ENCODE measurements at regions of chr19 and their contacts with region 1.

Region 1: DNA sequence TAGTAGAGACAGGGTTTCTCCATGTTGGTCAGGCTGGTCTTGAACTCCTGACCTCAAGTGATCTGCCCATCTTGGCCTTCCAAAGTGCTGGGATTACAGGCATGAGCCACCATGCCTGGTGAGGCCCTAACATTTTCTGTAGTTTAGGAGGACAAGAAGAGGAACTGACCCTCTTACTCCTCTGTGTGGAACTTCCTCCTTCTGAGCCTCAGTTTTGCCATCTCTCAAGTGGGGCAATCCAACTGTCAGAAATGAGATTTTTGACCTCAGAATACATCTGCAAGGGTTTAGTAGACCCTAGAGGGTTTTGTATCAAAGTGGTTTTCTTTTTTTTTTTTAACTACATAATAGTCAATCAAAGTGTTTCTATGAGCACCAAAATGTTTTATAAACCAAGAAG is 2.4 kb downstream of the DKKL1 start:
- DNase-seq: no peak
- H3K4me3 ChIP-seq: no peak overlapping the region
- H3K27ac ChIP-seq: peak overlapping the region; percentile 3
- H3K4me1 ChIP-seq: peaks cover 44% of the 10 kb centered on the region
- CTCF ChIP-seq: no peak

Region 2: DNA sequence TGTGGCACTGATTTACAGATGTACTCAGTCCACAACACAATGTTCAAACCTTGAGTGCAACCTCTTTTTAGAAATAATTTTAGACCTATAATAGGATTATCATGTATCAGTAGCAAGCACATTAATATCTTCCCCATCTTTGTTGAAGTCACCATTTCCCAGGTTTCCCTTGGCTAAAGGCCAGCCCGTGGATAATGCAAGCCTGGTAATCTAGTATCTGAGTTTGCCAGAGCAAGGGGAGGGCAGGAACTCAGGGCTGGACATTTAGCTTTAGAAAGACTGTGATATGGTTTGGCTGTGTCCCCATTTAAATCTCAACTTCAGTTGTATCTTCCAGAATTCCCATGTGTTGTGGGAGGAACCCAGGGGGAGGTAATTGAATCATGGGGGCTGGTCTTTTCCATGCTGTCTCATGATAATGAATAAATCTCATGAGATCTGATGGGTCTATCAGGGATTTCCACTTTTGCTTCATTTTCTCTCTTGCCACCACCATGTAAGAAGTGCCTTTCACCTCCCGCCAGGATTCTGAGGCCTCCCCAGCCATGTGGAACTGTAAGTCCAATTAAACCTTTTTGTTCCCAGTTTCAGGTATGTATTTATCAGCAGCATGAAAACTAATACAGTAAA is 78.9 kb before region 1 on chr19:
- CTCF ChIA-PET with region 1: no interaction called
- POLR2A ChIA-PET with region 1: no interaction called
- intact Hi-C with region 1: no loop called
- DNase-seq: no peak
- H3K4me3 ChIP-seq: no peak overlapping the region
- H3K27ac ChIP-seq: no peak overlapping the region
- H3K4me1 ChIP-seq: no peaks in the 10 kb centered on the region
- CTCF ChIP-seq: no peak

Region 3: GRCh38 chr19:49340069-49340864 is 25.8 kb before region 1 on chr19:
- CTCF ChIA-PET with region 1: no interaction called
- POLR2A ChIA-PET with region 1: no interaction called
- intact Hi-C with region 1: loop called (anchors 1 kb)
- DNase-seq: peak; percentile 99
- H3K4me3 ChIP-seq: peak overlapping the region; percentile 76
- H3K27ac ChIP-seq: peak overlapping the region; percentile 98
- H3K4me1 ChIP-seq: peaks cover 52% of the 10 kb centered on the region
- CTCF ChIP-seq: peak; percentile 21; the same call in 1 of the 2 replicates

Region 4: DNA sequence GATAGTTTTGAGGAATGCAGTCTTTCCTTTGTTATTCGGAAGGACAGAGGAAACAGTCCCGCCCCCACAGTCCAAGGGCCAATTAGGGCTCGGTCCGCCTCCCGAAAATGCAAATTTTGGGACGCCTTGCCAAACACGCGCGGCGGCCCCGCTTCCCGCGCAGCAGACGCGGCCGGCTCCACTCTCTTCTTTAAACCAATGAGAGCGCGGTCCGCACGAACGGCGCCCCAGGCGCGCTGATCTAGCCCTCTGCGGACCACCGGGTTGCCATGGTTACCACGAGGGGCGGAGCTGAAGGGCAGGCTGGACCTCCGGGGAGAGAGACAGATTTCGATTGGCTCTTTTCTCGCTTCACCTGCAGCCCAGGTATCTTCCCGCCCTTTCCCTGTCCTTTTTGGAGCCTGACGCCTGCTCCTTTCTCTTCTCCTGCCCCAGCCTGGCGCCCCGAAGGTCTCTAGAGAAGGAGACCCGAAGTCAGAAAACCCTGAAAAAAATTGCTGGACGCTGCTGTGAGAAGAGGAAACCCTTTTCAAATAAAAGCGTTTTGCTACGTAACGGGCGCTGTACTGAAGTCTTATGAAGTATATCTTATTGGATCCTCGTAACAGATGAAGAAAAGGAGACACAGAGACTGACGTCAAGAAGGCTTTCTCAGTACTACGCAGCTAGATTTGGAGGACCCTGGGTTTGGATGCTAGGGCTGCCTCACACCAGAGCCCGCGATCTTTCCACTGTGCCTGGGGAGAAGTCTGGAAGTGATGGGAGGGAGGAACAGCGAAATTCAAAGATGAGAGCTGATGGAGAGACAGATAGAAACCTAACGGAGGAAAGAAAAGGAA is 55.1 kb after region 1 on chr19:
- CTCF ChIA-PET with region 1: no interaction called
- POLR2A ChIA-PET with region 1: no interaction called
- intact Hi-C with region 1: no loop called
- DNase-seq: peak; percentile 89
- H3K4me3 ChIP-seq: peak overlapping the region; percentile 65
- H3K27ac ChIP-seq: no peak overlapping the region
- H3K4me1 ChIP-seq: peaks cover 64% of the 10 kb centered on the region
- CTCF ChIP-seq: no peak

Region 5: DNA sequence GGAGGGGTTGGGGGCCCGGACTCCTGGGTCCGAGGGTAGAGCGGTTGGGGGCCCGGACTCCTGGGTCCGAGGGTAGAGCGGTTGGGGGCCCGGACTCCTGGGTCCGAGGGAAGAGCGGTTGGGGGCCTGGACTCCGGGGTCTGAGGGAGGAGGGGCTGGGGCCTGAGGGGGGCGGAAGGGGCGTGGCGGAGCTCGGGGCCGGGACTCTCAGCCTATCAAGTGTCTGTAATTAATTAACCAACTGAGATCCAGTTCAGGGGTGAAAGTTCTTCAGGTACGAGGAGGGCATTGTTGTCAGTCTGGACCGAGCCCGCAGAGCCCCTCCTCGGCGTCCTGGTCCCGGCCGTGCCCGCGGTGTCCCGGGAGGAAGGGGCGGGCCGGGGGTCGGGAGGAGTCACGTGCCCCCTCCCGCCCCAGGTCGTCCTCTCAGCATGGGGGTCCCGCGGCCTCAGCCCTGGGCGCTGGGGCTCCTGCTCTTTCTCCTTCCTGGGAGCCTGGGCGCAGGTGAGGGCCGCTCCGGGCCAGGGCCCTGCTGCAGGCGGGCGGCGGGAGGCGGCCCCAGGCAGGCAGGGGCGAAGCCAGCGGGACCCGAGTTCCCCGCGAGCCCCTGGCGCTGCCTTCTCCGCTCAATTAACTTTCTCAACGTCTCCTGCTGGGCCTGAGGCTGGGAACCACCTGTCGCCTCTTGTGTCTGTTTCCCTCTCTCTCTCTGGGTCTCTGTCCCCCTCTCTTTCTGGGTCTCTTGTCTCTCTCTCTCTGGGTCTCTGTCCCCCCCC is 147.0 kb after region 1 on chr19:
- CTCF ChIA-PET with region 1: no interaction called
- POLR2A ChIA-PET with region 1: no interaction called
- intact Hi-C with region 1: no loop called
- DNase-seq: peak; percentile 59
- H3K4me3 ChIP-seq: peak overlapping the region; percentile 73
- H3K27ac ChIP-seq: no peak overlapping the region
- H3K4me1 ChIP-seq: peaks cover 21% of the 10 kb centered on the region
- CTCF ChIP-seq: no peak

Measured in OCI-LY7 (cell line).